ENCODE measurements at regions of chr2 and their contacts with region 1.

Region 1: GRCh38 chr2:207625018-207625907 is at the start of gene METTL21A:
- DNase-seq: peak; percentile 99
- ATAC-seq: peak; percentile 78
- H3K4me3 ChIP-seq: peak within 1 kb of the TSS; percentile 83 to 100 (median 95)
- H3K4me3 Mint-ChIP-seq: peak within 1 kb of the TSS; percentile 97
- H3K27ac ChIP-seq: peak within 1 kb of the TSS; percentile 98 to 99
- H3K27ac Mint-ChIP-seq: peak within 1 kb of the TSS; percentile 97
- H3K4me1 ChIP-seq: peaks cover 40 to 56% of the 10 kb centered on the region in 2 donors
- H3K4me1 Mint-ChIP-seq: peaks cover 45% of the 10 kb centered on the region
- H3K27me3 ChIP-seq: no peaks in the 10 kb centered on the region
- H3K27me3 Mint-ChIP-seq: no peaks in the 10 kb centered on the region
- CTCF ChIP-seq: peak; percentile 60
- total RNA-seq, gene METTL21A: 33.1 and 34.4 TPM in 2 replicates

Region 2: DNA sequence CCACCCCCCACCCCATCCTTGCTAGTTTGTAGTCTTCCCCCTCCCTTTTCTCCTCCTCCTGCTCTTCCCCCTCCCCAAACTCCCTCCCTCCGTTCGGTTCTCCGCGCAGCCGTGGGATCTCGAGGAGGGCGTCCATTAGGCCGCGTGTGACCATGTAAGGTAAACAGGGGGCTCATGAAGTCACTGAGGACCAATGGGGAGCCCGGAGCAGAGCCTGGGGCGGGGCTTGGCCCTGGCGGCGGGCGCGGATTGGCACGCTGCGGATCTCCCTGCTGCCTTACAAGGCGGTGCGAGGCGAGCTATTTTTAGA is 459.3 kb before region 1 on chr2:
- CTCF ChIA-PET with region 1: interaction called, 9 read pairs
- POLR2A ChIA-PET with region 1: interaction called, 9 read pairs
- intact Hi-C with region 1: loop called (anchors 2 kb)
- DNase-seq: peak; percentile 98
- ATAC-seq: peak; percentile 87
- H3K4me3 ChIP-seq: peak overlapping the region in 4 of 5 experiments; percentile 81 to 97 (median 85)
- H3K4me3 Mint-ChIP-seq: peak overlapping the region; percentile 98
- H3K27ac ChIP-seq: peak overlapping the region; percentile 95 to 99
- H3K27ac Mint-ChIP-seq: peak overlapping the region; percentile 99
- H3K4me1 ChIP-seq: peaks cover 42 to 45% of the 10 kb centered on the region in 2 donors
- H3K4me1 Mint-ChIP-seq: peaks cover 54% of the 10 kb centered on the region
- H3K27me3 ChIP-seq: no peaks in the 10 kb centered on the region
- H3K27me3 Mint-ChIP-seq: no peaks in the 10 kb centered on the region
- CTCF ChIP-seq: no peak

Region 3: GRCh38 chr2:207513551-207514257 is 111.6 kb before region 1 on chr2:
- CTCF ChIA-PET with region 1: no interaction called
- POLR2A ChIA-PET with region 1: no interaction called
- intact Hi-C with region 1: no loop called
- DNase-seq: no peak
- ATAC-seq: no peak
- H3K4me3 ChIP-seq: no peak overlapping the region
- H3K4me3 Mint-ChIP-seq: no peak overlapping the region
- H3K27ac ChIP-seq: no peak overlapping the region
- H3K27ac Mint-ChIP-seq: no peak overlapping the region
- H3K4me1 ChIP-seq: no peaks in the 10 kb centered on the region
- H3K4me1 Mint-ChIP-seq: no peaks in the 10 kb centered on the region
- H3K27me3 ChIP-seq: no peaks in the 10 kb centered on the region
- H3K27me3 Mint-ChIP-seq: no peaks in the 10 kb centered on the region
- CTCF ChIP-seq: no peak

Region 4: GRCh38 chr2:207558106-207558505 is 67.2 kb before region 1 on chr2:
- CTCF ChIA-PET with region 1: no interaction called
- POLR2A ChIA-PET with region 1: no interaction called
- intact Hi-C with region 1: no loop called
- DNase-seq: no peak
- ATAC-seq: no peak
- H3K4me3 ChIP-seq: no peak overlapping the region
- H3K4me3 Mint-ChIP-seq: no peak overlapping the region
- H3K27ac ChIP-seq: no peak overlapping the region
- H3K27ac Mint-ChIP-seq: peak overlapping the region; percentile 3
- H3K4me1 ChIP-seq: peaks cover 4 to 6% of the 10 kb centered on the region in 2 donors
- H3K4me1 Mint-ChIP-seq: peaks cover 24% of the 10 kb centered on the region
- H3K27me3 ChIP-seq: no peaks in the 10 kb centered on the region
- H3K27me3 Mint-ChIP-seq: no peaks in the 10 kb centered on the region
- CTCF ChIP-seq: no peak

Region 5: DNA sequence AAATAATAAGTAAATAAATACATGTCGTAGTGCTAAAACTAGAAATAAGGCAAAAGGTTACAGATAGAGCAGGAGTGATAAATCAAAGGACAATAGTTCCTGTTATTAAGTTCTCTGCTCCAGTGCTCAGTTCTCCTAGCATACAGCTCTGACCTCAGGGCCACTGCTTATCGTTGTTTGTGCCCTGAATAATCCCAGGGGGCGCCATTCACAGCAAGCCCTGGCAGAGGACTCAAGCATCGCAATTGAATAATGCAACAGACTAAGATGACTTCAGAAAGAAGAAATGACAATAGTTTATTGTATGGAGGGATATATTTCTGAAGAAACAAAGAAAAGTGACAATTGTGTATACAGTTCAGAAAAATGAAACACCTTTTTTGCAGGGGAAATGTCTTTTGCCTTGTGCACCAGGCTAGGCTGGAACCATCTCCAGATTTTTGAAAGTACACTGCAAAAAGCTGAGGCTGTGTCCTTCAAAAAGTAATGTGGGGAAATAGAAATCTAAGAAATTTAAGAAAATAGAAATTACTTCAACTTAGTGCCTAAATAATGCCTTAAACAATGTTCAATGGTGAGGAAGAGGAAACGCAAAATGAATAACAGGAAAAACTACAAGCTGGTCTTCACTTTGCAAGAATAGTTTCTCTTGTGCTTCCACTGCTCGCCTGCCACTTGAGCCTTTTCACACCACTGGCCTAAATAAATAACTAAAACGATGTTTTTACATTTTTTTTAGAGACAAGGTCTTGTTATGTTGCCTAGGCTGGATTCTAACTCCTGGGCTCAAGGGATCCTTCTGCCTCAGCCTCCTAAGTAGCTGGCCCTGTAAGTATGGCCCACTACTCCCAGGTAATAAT is 67.2 kb after region 1 on chr2:
- CTCF ChIA-PET with region 1: interaction called, 31 read pairs
- POLR2A ChIA-PET with region 1: no interaction called
- intact Hi-C with region 1: no loop called
- DNase-seq: peak; percentile 68
- ATAC-seq: peak; percentile 66
- H3K4me3 ChIP-seq: no peak overlapping the region
- H3K4me3 Mint-ChIP-seq: no peak overlapping the region
- H3K27ac ChIP-seq: no peak overlapping the region
- H3K27ac Mint-ChIP-seq: no peak overlapping the region
- H3K4me1 ChIP-seq: peaks cover 5 to 8% of the 10 kb centered on the region in 2 donors
- H3K4me1 Mint-ChIP-seq: peaks cover 4% of the 10 kb centered on the region
- H3K27me3 ChIP-seq: no peaks in the 10 kb centered on the region
- H3K27me3 Mint-ChIP-seq: no peaks in the 10 kb centered on the region
- CTCF ChIP-seq: peak; percentile 70

Region 6: GRCh38 chr2:207746131-207746530 is 120.9 kb after region 1 on chr2:
- CTCF ChIA-PET with region 1: interaction called, 48 read pairs
- POLR2A ChIA-PET with region 1: no interaction called
- intact Hi-C with region 1: no loop called
- DNase-seq: peak; percentile 72
- ATAC-seq: peak; percentile 73
- H3K4me3 ChIP-seq: no peak overlapping the region
- H3K4me3 Mint-ChIP-seq: no peak overlapping the region
- H3K27ac ChIP-seq: no peak overlapping the region
- H3K27ac Mint-ChIP-seq: no peak overlapping the region
- H3K4me1 ChIP-seq: no peaks in the 10 kb centered on the region
- H3K4me1 Mint-ChIP-seq: peaks cover 3% of the 10 kb centered on the region
- H3K27me3 ChIP-seq: no peaks in the 10 kb centered on the region
- H3K27me3 Mint-ChIP-seq: no peaks in the 10 kb centered on the region
- CTCF ChIP-seq: peak; percentile 80

Region 7: DNA sequence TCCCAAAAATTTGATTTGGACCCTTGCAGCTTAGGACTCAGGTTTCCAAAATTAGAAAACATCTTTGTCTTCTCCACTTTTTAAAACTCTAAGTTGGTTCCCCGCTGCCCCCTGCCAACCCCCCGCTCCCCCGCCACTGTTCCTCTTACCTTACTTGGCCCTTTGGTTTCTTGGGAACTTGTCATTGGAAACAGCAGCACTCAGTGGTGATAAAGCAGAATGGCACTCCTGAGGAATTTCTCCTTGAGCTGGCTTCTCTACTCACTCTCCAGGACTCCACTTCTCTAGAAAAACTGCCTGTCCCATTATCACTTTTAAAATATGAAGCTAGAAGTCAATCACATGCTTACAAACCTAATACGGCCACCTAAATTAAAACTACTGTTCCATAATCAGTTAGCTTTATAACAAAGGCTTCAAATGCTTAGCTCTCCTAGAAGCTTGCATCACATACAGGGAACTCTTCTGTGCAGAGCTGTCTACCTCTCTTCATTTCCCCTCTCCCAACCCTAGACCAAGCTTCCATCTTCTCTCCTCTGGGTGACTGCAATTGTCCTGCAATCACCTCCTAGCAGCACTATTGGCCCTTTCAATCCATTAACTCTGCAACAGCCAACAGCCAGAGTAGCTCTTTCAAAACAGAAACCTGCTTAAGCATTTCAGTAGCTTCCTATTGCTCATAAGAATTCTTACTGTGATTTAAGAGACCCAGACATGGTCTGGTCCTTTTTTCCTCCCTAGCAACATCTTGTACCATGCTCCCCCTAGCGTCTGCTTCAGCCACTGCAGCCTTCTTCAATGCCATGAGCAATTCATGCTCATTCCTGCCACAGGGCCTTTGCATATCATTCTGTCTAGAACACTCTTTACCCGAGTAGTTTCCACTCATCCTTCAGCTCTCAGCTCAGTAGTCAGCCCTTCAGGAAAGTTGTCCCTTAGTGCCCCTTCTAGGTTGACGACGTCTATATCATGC is 415.2 kb after region 1 on chr2:
- CTCF ChIA-PET with region 1: interaction called, 24 read pairs
- POLR2A ChIA-PET with region 1: no interaction called
- intact Hi-C with region 1: loop called (anchors 1 kb)
- DNase-seq: peak; percentile 71
- ATAC-seq: peak; percentile 73
- H3K4me3 ChIP-seq: no peak overlapping the region
- H3K4me3 Mint-ChIP-seq: no peak overlapping the region
- H3K27ac ChIP-seq: no peak overlapping the region
- H3K27ac Mint-ChIP-seq: no peak overlapping the region
- H3K4me1 ChIP-seq: no peaks in the 10 kb centered on the region
- H3K4me1 Mint-ChIP-seq: no peaks in the 10 kb centered on the region
- H3K27me3 ChIP-seq: peaks cover 0 to 4% (median 0%) of the 10 kb centered on the region in 4 experiments
- H3K27me3 Mint-ChIP-seq: no peaks in the 10 kb centered on the region
- CTCF ChIP-seq: peak; percentile 75

Region 8: GRCh38 chr2:208315081-208315788 is 690.0 kb after region 1 on chr2:
- CTCF ChIA-PET with region 1: no interaction called
- POLR2A ChIA-PET with region 1: no interaction called
- intact Hi-C with region 1: loop called (anchors 10 kb)
- DNase-seq: peak; percentile 65
- ATAC-seq: peak; percentile 52
- H3K4me3 ChIP-seq: peak overlapping the region in 3 of 5 experiments; percentile 20 to 71 (median 34)
- H3K4me3 Mint-ChIP-seq: peak overlapping the region; percentile 84
- H3K27ac ChIP-seq: peak overlapping the region; percentile 76 to 96
- H3K27ac Mint-ChIP-seq: peak overlapping the region; percentile 95
- H3K4me1 ChIP-seq: peaks cover 65 to 78% of the 10 kb centered on the region in 2 donors
- H3K4me1 Mint-ChIP-seq: peaks cover 75% of the 10 kb centered on the region
- H3K27me3 ChIP-seq: no peaks in the 10 kb centered on the region
- H3K27me3 Mint-ChIP-seq: no peaks in the 10 kb centered on the region
- CTCF ChIP-seq: peak; percentile 16

Measured in B cell (primary cell).